Endothelial cell of umbilical vein (primary cell): ENCODE measurements at regions of chr2 and their contacts with region 1.

Region 1: DNA sequence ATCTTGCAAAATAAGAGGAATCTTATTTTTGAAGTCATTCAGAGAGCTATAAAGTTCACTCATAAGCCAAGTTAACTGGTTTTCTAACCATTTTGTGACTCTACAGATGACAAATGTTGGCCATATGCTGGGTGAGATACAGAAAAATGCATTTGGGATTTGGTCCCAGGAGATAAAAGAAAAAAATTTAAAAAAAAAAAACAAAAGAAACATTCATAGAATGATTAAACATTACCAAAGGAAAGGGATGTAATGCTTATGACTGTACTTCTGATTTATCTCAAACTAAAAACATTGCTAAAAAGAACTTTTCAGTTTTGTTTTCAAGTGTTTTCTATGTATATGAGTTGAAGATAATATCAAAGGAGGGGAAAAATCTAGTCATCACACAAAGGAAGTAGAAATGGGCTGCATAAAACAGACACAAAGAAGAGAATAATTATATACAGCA is 43.1 kb downstream of the PELI1 start:
- DNase-seq: peak; percentile 84
- H3K4me3 ChIP-seq: peak overlapping the region in 1 of 3 experiments; percentile 34
- H3K27ac ChIP-seq: peak overlapping the region; percentile 60
- H3K4me1 ChIP-seq: peaks cover 39% of the 10 kb centered on the region
- H3K27me3 ChIP-seq: no peaks in the 10 kb centered on the region
- CTCF ChIP-seq: no peak
- POLR2A ChIP-seq: no peak

Region 2: GRCh38 chr2:64114063-64114911 is 13.1 kb after region 1 on chr2:
- CTCF ChIA-PET with region 1: interaction called, 8 read pairs
- POLR2A ChIA-PET with region 1: no interaction called
- dilution Hi-C with region 1: no loop called
- intact Hi-C with region 1: loop called (anchors 1 kb)
- DNase-seq: peak; percentile 69
- H3K4me3 ChIP-seq: no peak overlapping the region
- H3K27ac ChIP-seq: peak overlapping the region; percentile 7
- H3K4me1 ChIP-seq: peaks cover 35% of the 10 kb centered on the region
- H3K27me3 ChIP-seq: no peaks in the 10 kb centered on the region
- CTCF ChIP-seq: no peak
- POLR2A ChIP-seq: no peak